Heart left ventricle (tissue), 16 donors: ENCODE measurements at regions of chr19 and their contacts with region 1.

Region 1: DNA sequence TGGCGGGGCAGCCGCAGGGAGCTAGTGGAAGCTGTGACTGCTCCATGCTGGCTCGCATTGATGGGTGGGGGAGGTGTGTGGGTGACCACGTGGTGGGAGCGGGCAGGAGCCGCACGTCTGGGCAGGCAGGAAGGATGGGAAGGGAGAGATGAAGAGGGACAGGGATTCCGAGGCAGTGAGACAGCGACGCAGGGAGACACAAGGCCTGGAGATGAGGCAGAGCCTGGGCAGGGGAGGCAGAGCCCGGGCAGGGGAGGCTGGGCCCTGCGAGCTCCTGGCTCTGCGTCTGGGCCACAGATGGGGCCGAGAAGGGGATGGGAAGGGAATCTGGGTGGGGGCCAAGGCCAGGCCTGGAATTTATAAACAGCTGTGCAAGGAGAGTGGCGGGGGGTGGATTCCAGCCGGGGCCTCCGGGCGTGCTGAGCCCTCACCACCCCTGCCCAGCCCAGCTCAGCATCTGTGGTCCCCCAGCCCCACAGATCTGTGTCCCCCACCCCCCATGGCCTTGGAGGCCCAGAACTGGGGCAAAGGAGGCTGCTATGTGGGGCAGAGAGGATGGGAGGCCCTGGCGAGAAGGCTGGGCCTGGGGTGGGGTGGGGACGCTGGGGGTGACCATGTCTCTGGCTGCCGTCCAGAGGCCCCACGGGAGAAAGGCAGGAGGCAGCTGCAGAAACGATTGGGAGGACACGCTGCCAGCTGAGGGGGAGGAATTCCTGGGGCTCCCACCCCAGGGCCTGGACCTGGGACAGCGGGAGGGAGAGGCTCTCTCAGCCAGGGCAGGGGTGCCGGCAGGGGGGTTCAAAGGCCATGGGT is 6.0 kb downstream of the EHD2 start:
- DNase-seq: peak; percentile 91 to 94 (median 91)
- ATAC-seq: peak; percentile 68 to 88 (median 84)
- H3K4me3 ChIP-seq: peak overlapping the region in 11 of 12 donors; percentile 3 to 45 (median 30)
- H3K27ac ChIP-seq: peak overlapping the region; percentile 73 to 95 (median 86)
- H3K4me1 ChIP-seq: peaks cover 0 to 95% (median 53%) of the 10 kb centered on the region in 12 donors
- H3K27me3 ChIP-seq: no peaks in the 10 kb centered on the region
- CTCF ChIP-seq: no peak
- POLR2A ChIP-seq: no peak

Region 2: DNA sequence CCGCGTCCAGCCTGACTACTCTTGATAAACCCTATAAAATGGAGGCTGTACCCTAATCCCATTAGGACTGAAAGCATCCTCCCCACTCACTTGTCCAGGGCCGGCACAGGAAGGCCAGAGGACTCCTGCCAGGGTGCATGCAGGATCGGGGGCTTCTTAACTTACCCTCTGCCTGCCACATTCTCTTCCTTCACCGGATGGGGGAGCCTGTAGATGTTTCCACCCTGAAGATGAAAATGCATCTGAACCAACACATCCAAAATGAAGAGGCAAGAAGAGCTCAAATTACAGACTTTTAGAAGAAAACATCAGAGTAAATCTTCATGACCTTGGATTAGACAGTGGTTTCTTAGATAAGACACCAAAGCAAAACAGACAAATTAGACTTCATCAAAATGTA is 178.5 kb before region 1 on chr19:
- intact Hi-C with region 1: no loop called
- DNase-seq: no peak
- ATAC-seq: no peak
- H3K4me3 ChIP-seq: no peak overlapping the region
- H3K27ac ChIP-seq: peak overlapping the region in 1 of 12 donors; percentile 88
- H3K4me1 ChIP-seq: peaks cover 0 to 16% (median 5%) of the 10 kb centered on the region in 12 donors
- H3K27me3 ChIP-seq: peaks cover 0 to 23% (median 12%) of the 10 kb centered on the region in 9 donors
- CTCF ChIP-seq: peak in 2 of 12 donors; percentile 17 to 35
- POLR2A ChIP-seq: no peak

Region 3: GRCh38 chr19:47729992-47730889 is 11.0 kb after region 1 on chr19:
- intact Hi-C with region 1: loop called in 1 of 10 experiments (anchors 1 kb)
- DNase-seq: peak; percentile 87 to 91 (median 88)
- ATAC-seq: peak; percentile 79 to 94 (median 86)
- H3K4me3 ChIP-seq: peak overlapping the region in 10 of 12 donors; percentile 6 to 43 (median 24)
- H3K27ac ChIP-seq: peak overlapping the region; percentile 59 to 92 (median 80)
- H3K4me1 ChIP-seq: peaks cover 0 to 57% (median 33%) of the 10 kb centered on the region in 12 donors
- H3K27me3 ChIP-seq: peaks cover 0 to 19% (median 0%) of the 10 kb centered on the region in 9 donors
- CTCF ChIP-seq: no peak
- POLR2A ChIP-seq: no peak

Region 4: DNA sequence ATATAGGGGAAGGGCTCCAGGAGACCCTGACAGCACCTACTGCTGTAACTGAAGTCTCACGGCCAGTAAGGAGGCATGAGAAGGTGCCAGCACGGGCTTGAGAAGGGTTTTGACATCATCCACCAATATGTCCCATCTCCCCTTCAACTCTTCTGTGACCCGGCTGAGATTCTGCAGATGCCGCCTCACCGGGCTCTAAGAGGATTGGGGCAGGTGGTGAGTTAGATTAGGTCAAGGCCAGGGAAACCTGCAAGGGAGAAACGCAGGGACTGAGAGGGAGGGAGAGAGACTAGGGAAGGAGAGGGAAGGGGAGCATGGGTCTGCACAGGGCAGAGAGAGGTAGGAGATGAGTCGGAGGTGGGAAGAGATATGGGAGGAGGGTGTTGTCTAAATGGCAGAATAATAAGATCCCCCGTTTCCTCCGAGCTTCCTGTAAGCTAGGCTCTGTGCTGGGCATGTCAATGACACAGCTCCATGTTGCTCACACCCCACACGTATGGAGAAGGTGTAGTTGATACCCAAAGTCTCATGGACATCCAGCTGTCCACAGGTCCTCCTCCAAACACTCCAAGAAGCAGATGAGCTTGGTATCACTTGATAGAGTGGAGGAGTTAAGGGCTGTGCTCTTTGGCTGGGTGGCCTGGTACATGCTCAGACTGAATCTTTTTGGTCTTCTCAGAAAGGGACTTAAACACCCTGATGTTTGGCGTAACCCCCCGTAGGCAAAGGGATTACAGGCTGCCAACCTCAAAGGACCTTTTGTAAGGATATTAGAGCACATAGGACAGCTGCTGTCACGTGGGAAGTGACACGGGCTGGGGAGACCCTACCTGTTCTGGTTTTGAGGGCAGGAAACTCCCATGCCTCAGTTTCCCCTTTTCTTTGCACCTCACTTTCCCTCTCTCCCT is 79.0 kb after region 1 on chr19:
- intact Hi-C with region 1: no loop called
- DNase-seq: no peak
- ATAC-seq: no peak
- H3K4me3 ChIP-seq: no peak overlapping the region
- H3K27ac ChIP-seq: no peak overlapping the region
- H3K4me1 ChIP-seq: no peaks in the 10 kb centered on the region
- H3K27me3 ChIP-seq: peaks cover 0 to 4% (median 0%) of the 10 kb centered on the region in 9 donors
- CTCF ChIP-seq: no peak
- POLR2A ChIP-seq: no peak